PC-3 (cell line): ENCODE measurements at regions of chr6 and their contacts with region 1.

Region 1: DNA sequence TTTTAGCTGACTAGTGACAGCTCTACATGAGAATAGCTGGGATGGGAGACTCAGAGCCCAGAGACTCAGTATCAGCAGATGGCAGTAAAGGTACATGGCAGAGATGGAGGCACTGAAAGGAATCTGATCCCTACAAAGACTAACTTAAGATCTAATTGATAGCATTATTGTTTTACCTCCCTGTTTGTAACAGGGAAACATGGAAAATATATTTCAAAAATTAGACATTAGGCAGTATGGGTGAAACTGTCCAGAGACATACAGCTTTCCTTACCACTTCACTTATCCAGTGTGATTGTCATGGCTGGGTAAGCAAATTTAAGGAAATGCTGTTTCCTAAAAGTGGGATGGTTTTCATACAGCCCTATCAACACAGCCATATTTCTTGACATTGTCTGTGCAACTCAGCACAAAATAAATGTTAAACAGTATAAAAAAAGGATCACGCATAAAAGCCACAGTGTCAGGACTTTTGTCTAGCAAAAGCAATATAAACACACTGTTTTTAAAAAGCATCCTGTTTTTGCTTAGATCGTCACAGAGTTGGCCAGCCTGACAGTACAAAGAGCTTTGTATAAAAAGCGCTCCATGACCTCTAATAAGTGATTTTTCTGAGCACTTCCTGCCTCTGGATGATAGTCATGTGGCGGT is 376.9 kb downstream of the PHF3 start:
- DNase-seq: peak; percentile 73
- ATAC-seq: peak; percentile 94
- H3K4me3 ChIP-seq: no peak overlapping the region
- H3K27ac ChIP-seq: no peak overlapping the region
- H3K4me1 ChIP-seq: peaks cover 4% of the 10 kb centered on the region; the same call in 1 of the 2 replicates
- H3K27me3 ChIP-seq: no peaks in the 10 kb centered on the region
- CTCF ChIP-seq: peak; percentile 83

Region 2: DNA sequence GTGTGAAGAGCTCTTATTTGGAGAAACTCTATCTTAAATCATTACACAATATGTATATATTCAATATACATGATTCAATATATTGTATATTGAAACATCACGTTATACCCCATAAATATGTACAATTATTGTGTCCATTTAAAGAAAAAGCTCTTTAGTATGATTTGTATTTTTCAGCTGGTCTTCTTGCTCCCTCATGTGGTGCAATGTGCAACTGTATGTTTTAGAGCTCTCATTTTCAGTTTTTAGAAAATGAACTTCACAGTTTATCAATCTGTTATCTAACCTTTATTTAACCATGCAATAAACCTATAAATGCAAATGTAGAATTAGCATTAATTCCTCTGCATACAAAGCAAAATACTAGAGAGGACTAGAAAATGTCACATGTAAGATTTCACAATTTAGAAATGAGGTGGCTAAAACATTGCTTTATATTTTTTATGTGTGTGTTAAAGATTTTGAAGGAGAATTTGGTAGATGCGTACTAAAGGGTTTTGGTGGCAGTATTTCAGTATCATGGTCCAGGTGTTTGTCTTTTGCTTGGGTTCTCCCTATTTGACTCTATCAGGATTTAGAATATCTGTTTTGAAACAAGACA is 209.8 kb before region 1 on chr6:
- CTCF ChIA-PET with region 1: no interaction called
- POLR2A ChIA-PET with region 1: no interaction called
- intact Hi-C with region 1: no loop called
- DNase-seq: peak; percentile 51
- ATAC-seq: no peak
- H3K4me3 ChIP-seq: no peak overlapping the region
- H3K27ac ChIP-seq: peak overlapping the region; percentile 100
- H3K4me1 ChIP-seq: peaks cover 43% of the 10 kb centered on the region
- H3K27me3 ChIP-seq: no peaks in the 10 kb centered on the region
- CTCF ChIP-seq: peak; percentile 74

Region 3: DNA sequence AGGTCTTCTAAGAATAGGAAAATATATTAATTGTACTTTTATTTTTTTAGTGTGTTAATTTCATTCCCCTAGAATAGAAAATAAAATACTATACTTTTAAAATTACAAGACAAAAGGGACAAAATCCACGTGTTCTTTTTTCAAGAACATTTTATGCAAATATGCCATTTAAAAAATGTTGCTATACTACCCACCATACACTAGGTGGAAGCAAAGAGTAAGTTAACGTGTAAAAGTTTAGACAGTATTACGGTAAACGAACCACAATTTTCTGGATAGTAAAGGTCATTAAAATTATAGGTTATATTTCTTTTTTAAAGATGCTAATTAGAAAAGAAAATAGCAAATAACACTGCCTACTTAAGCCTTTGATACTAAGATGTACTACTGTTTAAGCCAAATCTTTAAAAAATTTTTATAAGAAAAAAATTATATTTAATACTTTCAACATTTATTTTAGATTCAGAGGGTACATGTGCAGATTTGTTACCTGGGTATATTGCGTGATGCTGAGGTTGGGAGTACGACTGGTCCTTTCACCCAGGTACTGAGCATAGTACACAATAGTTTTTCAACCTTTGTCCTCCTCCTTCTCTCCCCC is 89.2 kb before region 1 on chr6:
- CTCF ChIA-PET with region 1: no interaction called
- POLR2A ChIA-PET with region 1: no interaction called
- intact Hi-C with region 1: loop called (anchors 10 kb)
- DNase-seq: peak; percentile 55
- ATAC-seq: no peak
- H3K4me3 ChIP-seq: no peak overlapping the region
- H3K27ac ChIP-seq: no peak overlapping the region
- H3K4me1 ChIP-seq: no peaks in the 10 kb centered on the region
- H3K27me3 ChIP-seq: no peaks in the 10 kb centered on the region
- CTCF ChIP-seq: peak; percentile 57

Region 4: GRCh38 chr6:64050590-64050989 is 38.1 kb after region 1 on chr6:
- CTCF ChIA-PET with region 1: no interaction called
- POLR2A ChIA-PET with region 1: no interaction called
- intact Hi-C with region 1: no loop called
- DNase-seq: no peak
- ATAC-seq: no peak
- H3K4me3 ChIP-seq: no peak overlapping the region
- H3K27ac ChIP-seq: no peak overlapping the region
- H3K4me1 ChIP-seq: peaks cover 12% of the 10 kb centered on the region; the same call in 1 of the 2 replicates
- H3K27me3 ChIP-seq: no peaks in the 10 kb centered on the region
- CTCF ChIP-seq: no peak

Region 5: DNA sequence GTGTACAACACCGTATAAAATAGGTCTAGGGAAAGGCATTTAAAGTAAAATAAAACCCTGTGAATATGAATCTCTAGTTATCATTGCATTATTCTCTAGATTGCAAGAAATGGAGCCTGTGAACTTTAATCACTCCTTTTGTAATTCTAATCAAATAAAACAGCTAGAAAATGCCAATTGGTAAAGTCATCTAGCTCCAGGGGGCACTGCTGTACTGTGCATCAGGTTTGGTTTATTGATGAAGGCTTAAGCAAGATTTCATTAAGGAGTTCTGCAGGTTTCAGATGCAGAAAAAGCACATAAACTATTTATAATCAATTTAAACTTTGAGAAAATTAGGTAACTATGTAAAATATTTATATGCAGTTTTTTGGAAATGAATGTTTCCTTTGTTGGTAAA is 268.1 kb after region 1 on chr6:
- CTCF ChIA-PET with region 1: interaction called, 5 read pairs
- POLR2A ChIA-PET with region 1: no interaction called
- intact Hi-C with region 1: loop called (anchors 1 kb)
- DNase-seq: peak; percentile 71
- ATAC-seq: peak; percentile 43; the same call in 1 of the 2 replicates
- H3K4me3 ChIP-seq: no peak overlapping the region
- H3K27ac ChIP-seq: no peak overlapping the region
- H3K4me1 ChIP-seq: peaks cover 4% of the 10 kb centered on the region; the same call in 1 of the 2 replicates
- H3K27me3 ChIP-seq: no peaks in the 10 kb centered on the region
- CTCF ChIP-seq: peak; percentile 76

Region 6: GRCh38 chr6:64477391-64477790 is 464.9 kb after region 1 on chr6:
- CTCF ChIA-PET with region 1: no interaction called
- POLR2A ChIA-PET with region 1: no interaction called
- intact Hi-C with region 1: loop called (anchors 5 kb)
- DNase-seq: no peak
- ATAC-seq: no peak
- H3K4me3 ChIP-seq: no peak overlapping the region
- H3K27ac ChIP-seq: no peak overlapping the region
- H3K4me1 ChIP-seq: no peaks in the 10 kb centered on the region
- H3K27me3 ChIP-seq: no peaks in the 10 kb centered on the region
- CTCF ChIP-seq: no peak

Region 7: GRCh38 chr6:64672131-64672530 is 659.7 kb after region 1 on chr6:
- CTCF ChIA-PET with region 1: no interaction called
- POLR2A ChIA-PET with region 1: no interaction called
- intact Hi-C with region 1: no loop called
- DNase-seq: no peak
- ATAC-seq: no peak
- H3K4me3 ChIP-seq: no peak overlapping the region
- H3K27ac ChIP-seq: no peak overlapping the region
- H3K4me1 ChIP-seq: no peaks in the 10 kb centered on the region
- H3K27me3 ChIP-seq: no peaks in the 10 kb centered on the region
- CTCF ChIP-seq: no peak

Region 8: GRCh38 chr6:64838726-64839125 is 826.2 kb after region 1 on chr6:
- CTCF ChIA-PET with region 1: no interaction called
- POLR2A ChIA-PET with region 1: no interaction called
- intact Hi-C with region 1: loop called (anchors 5 kb)
- DNase-seq: peak; percentile 25
- ATAC-seq: peak; percentile 48; the same call in 1 of the 2 replicates
- H3K4me3 ChIP-seq: no peak overlapping the region
- H3K27ac ChIP-seq: no peak overlapping the region
- H3K4me1 ChIP-seq: no peaks in the 10 kb centered on the region
- H3K27me3 ChIP-seq: no peaks in the 10 kb centered on the region
- CTCF ChIP-seq: no peak; the same call in 1 of the 2 replicates